Right cardiac atrium (tissue), 5 donors: ENCODE measurements at regions of chr21 and their contacts with region 1.

Region 1: GRCh38 chr21:37711836-37712568 is 204.3 kb downstream of the KCNJ6 start:
- DNase-seq: peak; percentile 63 to 82 (median 76)
- ATAC-seq: peak; percentile 80 to 83
- H3K4me3 ChIP-seq: no peak overlapping the region
- H3K27ac ChIP-seq: no peak overlapping the region
- H3K4me1 ChIP-seq: peaks cover 2% of the 10 kb centered on the region
- H3K27me3 ChIP-seq: no peaks in the 10 kb centered on the region

Region 2: GRCh38 chr21:37452227-37452626 is 259.8 kb before region 1 on chr21:
- intact Hi-C with region 1: no loop called
- DNase-seq: peak in 2 of 3 donors; percentile 25 to 51
- ATAC-seq: peak; percentile 74 to 85
- H3K4me3 ChIP-seq: no peak overlapping the region
- H3K27ac ChIP-seq: peak overlapping the region; percentile 46
- H3K4me1 ChIP-seq: peaks cover 27% of the 10 kb centered on the region
- H3K27me3 ChIP-seq: no peaks in the 10 kb centered on the region

Region 3: GRCh38 chr21:37878946-37879660 is 167.1 kb after region 1 on chr21:
- intact Hi-C with region 1: no loop called
- DNase-seq: no peak
- ATAC-seq: peak in 1 of 2 donors; percentile 29
- H3K4me3 ChIP-seq: no peak overlapping the region
- H3K27ac ChIP-seq: no peak overlapping the region
- H3K4me1 ChIP-seq: no peaks in the 10 kb centered on the region
- H3K27me3 ChIP-seq: no peaks in the 10 kb centered on the region

Region 4: GRCh38 chr21:37916310-37917051 is 204.5 kb after region 1 on chr21 and contains the start of gene KCNJ6:
- intact Hi-C with region 1: loop called in 3 of 4 experiments (anchors 10 kb)
- DNase-seq: peak; percentile 22 to 63 (median 62)
- ATAC-seq: peak; percentile 65 to 71
- H3K4me3 ChIP-seq: peak within 1 kb of the TSS; percentile 30
- H3K27ac ChIP-seq: no peak within 1 kb of the TSS
- H3K4me1 ChIP-seq: no peaks in the 10 kb centered on the region
- H3K27me3 ChIP-seq: no peaks in the 10 kb centered on the region
- total RNA-seq, gene KCNJ6: 0.03 TPM in 1 of 4 donors, not detected in the others

Region 5: DNA sequence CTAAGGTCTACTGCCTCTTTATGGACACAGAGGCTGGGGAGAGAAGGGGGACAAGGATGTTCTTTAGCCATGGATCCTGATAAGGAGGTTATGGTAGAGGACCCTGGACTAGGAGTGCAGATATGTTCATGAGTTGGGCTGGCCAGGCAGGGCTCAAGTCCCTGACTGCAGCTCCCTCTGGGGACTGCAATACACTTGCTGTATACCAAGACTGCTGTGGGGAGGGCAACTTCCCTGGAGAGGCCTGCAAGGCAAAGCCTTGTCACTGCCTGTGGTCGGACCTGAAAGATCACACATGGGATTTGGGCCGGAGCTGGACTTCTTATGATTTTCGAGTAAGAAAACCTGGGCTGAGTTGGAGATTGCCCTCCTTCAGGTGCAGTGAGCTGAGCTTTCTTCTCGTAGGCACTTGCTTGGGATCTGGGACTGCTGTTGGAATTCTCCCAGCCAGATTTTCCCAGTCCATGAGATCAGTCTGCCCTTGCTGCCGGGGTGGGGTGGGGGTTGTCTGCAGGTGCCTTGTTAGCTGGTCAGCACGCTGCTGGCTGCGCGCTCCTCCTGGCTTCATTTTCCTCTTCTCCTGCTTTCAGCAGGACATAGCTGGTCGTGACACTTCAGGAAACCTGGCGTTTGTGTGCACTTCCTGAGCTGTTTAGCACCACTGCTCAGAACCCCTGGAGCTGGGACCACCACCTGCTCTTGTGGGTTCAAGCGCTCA is 253.2 kb after region 1 on chr21:
- intact Hi-C with region 1: no loop called
- DNase-seq: no peak
- ATAC-seq: no peak
- H3K4me3 ChIP-seq: no peak overlapping the region
- H3K27ac ChIP-seq: no peak overlapping the region
- H3K4me1 ChIP-seq: no peaks in the 10 kb centered on the region
- H3K27me3 ChIP-seq: no peaks in the 10 kb centered on the region